ENCODE measurements at regions of chr12 and their contacts with region 1.

Region 1: GRCh38 chr12:48977315-48978281 is 524 bp upstream of the WNT1 start:
- DNase-seq: peak; percentile 71
- H3K4me3 ChIP-seq: peak overlapping the region; percentile 32
- H3K27ac ChIP-seq: no peak overlapping the region
- H3K4me1 ChIP-seq: peaks cover 32% of the 10 kb centered on the region
- H3K27me3 ChIP-seq: peaks cover 69% of the 10 kb centered on the region
- CTCF ChIP-seq: peak; percentile 81

Region 2: DNA sequence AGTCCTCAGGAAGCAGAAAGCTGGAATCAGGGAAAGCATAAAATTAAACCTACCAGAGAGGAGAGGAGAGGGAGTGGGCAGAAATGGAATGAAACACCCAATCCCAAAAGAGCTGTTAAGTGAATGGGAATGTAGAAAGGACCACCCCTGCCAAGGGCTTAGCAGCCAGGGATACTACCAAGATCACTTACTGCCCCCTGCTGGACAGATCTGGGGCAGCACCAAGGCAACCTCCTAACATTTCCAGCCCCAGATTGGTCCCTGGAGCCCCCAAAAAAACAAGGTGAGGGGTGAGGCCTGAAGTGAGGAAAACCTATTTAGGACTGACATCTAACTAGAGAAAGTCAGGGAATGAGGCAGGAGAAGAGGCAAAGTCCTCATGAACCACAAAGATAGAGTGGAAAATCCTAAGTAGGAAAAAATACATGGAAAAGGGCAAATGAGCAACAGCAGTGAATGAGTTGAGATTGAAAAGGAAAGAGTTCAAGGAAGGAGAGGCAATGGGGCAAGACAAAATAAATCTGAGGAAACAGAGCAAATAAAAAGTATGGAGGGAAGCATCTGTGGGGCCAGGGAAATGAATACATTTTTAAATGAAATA is 41.1 kb before region 1 on chr12:
- CTCF ChIA-PET with region 1: no interaction called
- POLR2A ChIA-PET with region 1: no interaction called
- intact Hi-C with region 1: loop called (anchors 2 kb)
- DNase-seq: peak; percentile 78
- H3K4me3 ChIP-seq: no peak overlapping the region
- H3K27ac ChIP-seq: no peak overlapping the region
- H3K4me1 ChIP-seq: no peaks in the 10 kb centered on the region
- H3K27me3 ChIP-seq: no peaks in the 10 kb centered on the region
- CTCF ChIP-seq: peak; percentile 96

Measured in A673 (cell line).